Naive thymus-derived CD4-positive, alpha-beta T cell (primary cell): ENCODE measurements at regions of chr19 and their contacts with region 1.

Region 1: GRCh38 chr19:41263850-41264580 is at the start of gene HNRNPUL1:
- DNase-seq: peak; percentile 99 to 100 (median 100)
- ATAC-seq: peak; percentile 76
- H3K4me3 ChIP-seq: peak within 1 kb of the TSS; percentile 84
- H3K4me3 Mint-ChIP-seq: peak within 1 kb of the TSS; percentile 95 to 100 (median 98)
- H3K27ac ChIP-seq: peak within 1 kb of the TSS; percentile 99
- H3K27ac Mint-ChIP-seq: peak within 1 kb of the TSS; percentile 99 to 100 (median 100)
- H3K4me1 ChIP-seq: peaks cover 22 to 30% of the 10 kb centered on the region in 2 donors
- H3K4me1 Mint-ChIP-seq: peaks cover 33 to 61% (median 41%) of the 10 kb centered on the region in 7 donors
- H3K27me3 ChIP-seq: no peaks in the 10 kb centered on the region
- H3K27me3 Mint-ChIP-seq: peaks cover 0 to 8% (median 0%) of the 10 kb centered on the region in 5 donors
- total RNA-seq, gene HNRNPUL1: 253 to 319 (median 280) TPM

Region 2: DNA sequence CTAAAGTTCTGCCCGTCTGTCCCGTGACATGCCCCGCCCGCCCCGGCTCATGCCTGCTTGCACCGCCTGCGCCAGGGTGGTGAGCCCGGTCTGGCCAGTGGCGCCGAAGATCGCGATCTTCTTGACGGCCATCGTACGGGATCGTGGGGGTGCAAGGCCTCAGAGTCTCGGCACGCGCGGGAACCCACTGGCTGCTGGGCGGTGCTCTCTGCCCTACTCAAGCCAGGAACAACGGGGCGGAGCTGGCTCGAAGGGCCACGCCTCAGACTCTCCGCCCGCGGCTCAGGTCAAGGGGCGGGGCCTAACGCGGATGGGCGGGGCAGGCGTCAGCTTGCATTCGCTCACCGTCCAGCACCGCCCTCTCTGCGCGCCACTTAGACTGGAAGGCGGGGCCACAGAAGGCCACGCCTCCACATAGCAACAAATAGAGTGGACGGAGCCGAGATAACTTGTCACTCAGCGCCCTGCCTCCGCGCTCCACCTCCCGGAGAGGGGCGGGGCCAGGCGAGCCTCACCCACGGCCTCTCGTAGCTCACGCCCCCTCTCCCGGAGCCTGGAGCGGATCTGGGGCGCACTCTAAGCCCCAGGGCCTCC is 798.4 kb before region 1 on chr19 and contains the start of gene BLVRB:
- CTCF ChIA-PET with region 1: no interaction called
- POLR2A ChIA-PET with region 1: no interaction called
- intact Hi-C with region 1: loop called in 1 of 2 experiments (anchors 5 kb)
- DNase-seq: peak; percentile 98 to 100 (median 99)
- ATAC-seq: peak; percentile 90
- H3K4me3 ChIP-seq: peak within 1 kb of the TSS; percentile 44
- H3K4me3 Mint-ChIP-seq: peak within 1 kb of the TSS; percentile 83 to 95 (median 86)
- H3K27ac ChIP-seq: peak within 1 kb of the TSS; percentile 66
- H3K27ac Mint-ChIP-seq: peak within 1 kb of the TSS; percentile 70 to 94 (median 87)
- H3K4me1 ChIP-seq: peaks cover 0 to 7% of the 10 kb centered on the region in 2 donors
- H3K4me1 Mint-ChIP-seq: peaks cover 18 to 27% (median 25%) of the 10 kb centered on the region in 7 donors
- H3K27me3 ChIP-seq: peaks cover 3 to 4% of the 10 kb centered on the region in 2 donors
- H3K27me3 Mint-ChIP-seq: peaks cover 6 to 28% (median 7%) of the 10 kb centered on the region in 5 donors
- total RNA-seq, gene BLVRB: 11.0 to 42.2 (median 13.3) TPM

Region 3: GRCh38 chr19:40750059-40750873 is 513.7 kb before region 1 on chr19 and contains the start of gene ACTMAP:
- CTCF ChIA-PET with region 1: interaction called, 3 read pairs
- POLR2A ChIA-PET with region 1: interaction called, 8 read pairs
- intact Hi-C with region 1: loop called in 1 of 2 experiments (anchors 1 kb)
- DNase-seq: peak; percentile 95 to 100 (median 100)
- ATAC-seq: peak; percentile 93
- H3K4me3 ChIP-seq: peak within 1 kb of the TSS; percentile 96
- H3K4me3 Mint-ChIP-seq: peak within 1 kb of the TSS; percentile 93 to 100 (median 96)
- H3K27ac ChIP-seq: peak within 1 kb of the TSS; percentile 84
- H3K27ac Mint-ChIP-seq: peak within 1 kb of the TSS; percentile 90 to 99 (median 98)
- H3K4me1 ChIP-seq: peaks cover 11 to 27% of the 10 kb centered on the region in 2 donors
- H3K4me1 Mint-ChIP-seq: peaks cover 31 to 43% (median 42%) of the 10 kb centered on the region in 7 donors
- H3K27me3 ChIP-seq: no peaks in the 10 kb centered on the region
- H3K27me3 Mint-ChIP-seq: no peaks in the 10 kb centered on the region
- total RNA-seq, gene ACTMAP: 5.5 to 13.7 (median 7.8) TPM

Region 4: GRCh38 chr19:41144403-41144802 is 119.6 kb before region 1 on chr19:
- CTCF ChIA-PET with region 1: no interaction called
- POLR2A ChIA-PET with region 1: interaction called, 3 read pairs
- intact Hi-C with region 1: loop called in 1 of 2 experiments (anchors 1 kb)
- DNase-seq: peak; percentile 68 to 88 (median 84)
- ATAC-seq: peak; percentile 96
- H3K4me3 ChIP-seq: no peak overlapping the region
- H3K4me3 Mint-ChIP-seq: no peak overlapping the region
- H3K27ac ChIP-seq: no peak overlapping the region
- H3K27ac Mint-ChIP-seq: peak overlapping the region in 4 of 9 donors; percentile 44 to 78 (median 58)
- H3K4me1 ChIP-seq: no peaks in the 10 kb centered on the region
- H3K4me1 Mint-ChIP-seq: peaks cover 0 to 3% (median 0%) of the 10 kb centered on the region in 7 donors
- H3K27me3 ChIP-seq: no peaks in the 10 kb centered on the region
- H3K27me3 Mint-ChIP-seq: peaks cover 0 to 29% (median 15%) of the 10 kb centered on the region in 5 donors

Region 5: DNA sequence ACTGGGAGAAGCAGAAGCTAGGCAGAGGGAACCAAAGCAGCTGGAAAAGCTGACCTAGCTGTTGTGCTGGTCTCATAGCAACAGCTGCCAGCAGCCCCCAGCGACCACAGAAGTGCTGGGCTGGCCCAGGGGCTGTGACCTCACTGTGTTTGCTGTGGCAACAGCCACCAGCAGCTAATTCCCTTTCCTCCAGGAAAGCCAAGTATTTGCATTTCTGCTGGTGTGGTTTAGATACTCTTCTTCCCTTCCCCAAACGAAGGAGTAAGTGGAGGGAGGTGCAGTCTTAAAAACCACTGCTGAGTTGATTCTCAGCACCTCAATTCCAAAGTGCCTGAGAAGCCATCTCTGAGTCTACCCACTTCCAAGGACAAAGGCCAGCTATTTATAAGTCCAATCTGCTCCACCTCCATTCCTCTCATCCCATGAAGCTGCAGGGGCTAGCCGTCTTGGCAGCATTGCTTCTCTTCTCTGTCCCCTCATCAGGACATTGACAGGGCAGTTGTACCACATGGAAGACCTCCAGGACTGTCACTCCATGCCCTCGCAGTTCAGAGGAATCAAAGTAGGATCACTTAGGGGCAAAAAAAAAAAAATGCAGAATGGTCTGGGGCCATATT is 34.4 kb after region 1 on chr19:
- CTCF ChIA-PET with region 1: interaction called, 5 read pairs
- POLR2A ChIA-PET with region 1: interaction called, 339 read pairs
- intact Hi-C with region 1: no loop called
- DNase-seq: no peak
- ATAC-seq: peak; percentile 63
- H3K4me3 ChIP-seq: no peak overlapping the region
- H3K4me3 Mint-ChIP-seq: peak overlapping the region in 7 of 10 donors; percentile 9 to 95 (median 38)
- H3K27ac ChIP-seq: peak overlapping the region; percentile 74
- H3K27ac Mint-ChIP-seq: peak overlapping the region; percentile 71 to 99 (median 91)
- H3K4me1 ChIP-seq: peaks cover 68 to 75% of the 10 kb centered on the region in 2 donors
- H3K4me1 Mint-ChIP-seq: peaks cover 63 to 91% (median 82%) of the 10 kb centered on the region in 7 donors
- H3K27me3 ChIP-seq: no peaks in the 10 kb centered on the region
- H3K27me3 Mint-ChIP-seq: no peaks in the 10 kb centered on the region

Region 6: GRCh38 chr19:41397086-41398049 is 133.4 kb after region 1 on chr19 and contains the starts of genes BCKDHA and EXOSC5:
- CTCF ChIA-PET with region 1: no interaction called
- POLR2A ChIA-PET with region 1: no interaction called
- intact Hi-C with region 1: loop called (anchors 1 kb)
- DNase-seq: peak; percentile 96 to 100 (median 99)
- ATAC-seq: peak; percentile 99
- H3K4me3 ChIP-seq: peak within 1 kb of the TSS; percentile 96
- H3K4me3 Mint-ChIP-seq: peak within 1 kb of the TSS; percentile 95 to 99 (median 98)
- H3K27ac ChIP-seq: peak within 1 kb of the TSS; percentile 89
- H3K27ac Mint-ChIP-seq: peak within 1 kb of the TSS; percentile 99 to 100 (median 100)
- H3K4me1 ChIP-seq: peaks cover 19 to 23% of the 10 kb centered on the region in 2 donors
- H3K4me1 Mint-ChIP-seq: peaks cover 33 to 61% (median 50%) of the 10 kb centered on the region in 7 donors
- H3K27me3 ChIP-seq: no peaks in the 10 kb centered on the region
- H3K27me3 Mint-ChIP-seq: no peaks in the 10 kb centered on the region
- total RNA-seq, gene BCKDHA: 19.4 to 25.0 (median 20.5) TPM
- total RNA-seq, gene EXOSC5: 15.0 to 37.5 (median 20.6) TPM

Region 7: GRCh38 chr19:41476583-41476982 is 212.6 kb after region 1 on chr19:
- CTCF ChIA-PET with region 1: no interaction called
- POLR2A ChIA-PET with region 1: no interaction called
- intact Hi-C with region 1: no loop called
- DNase-seq: no peak
- ATAC-seq: no peak
- H3K4me3 ChIP-seq: no peak overlapping the region
- H3K4me3 Mint-ChIP-seq: no peak overlapping the region
- H3K27ac ChIP-seq: no peak overlapping the region
- H3K27ac Mint-ChIP-seq: no peak overlapping the region
- H3K4me1 ChIP-seq: no peaks in the 10 kb centered on the region
- H3K4me1 Mint-ChIP-seq: peaks cover 0 to 5% (median 0%) of the 10 kb centered on the region in 7 donors
- H3K27me3 ChIP-seq: no peaks in the 10 kb centered on the region
- H3K27me3 Mint-ChIP-seq: peaks cover 35 to 49% (median 43%) of the 10 kb centered on the region in 5 donors

Region 8: GRCh38 chr19:42268704-42269477 is 1004.9 kb after region 1 on chr19 and contains the start of gene CIC:
- CTCF ChIA-PET with region 1: no interaction called
- POLR2A ChIA-PET with region 1: no interaction called
- intact Hi-C with region 1: loop called in 1 of 2 experiments (anchors 5 kb)
- DNase-seq: peak; percentile 95 to 100 (median 99)
- ATAC-seq: peak; percentile 82
- H3K4me3 ChIP-seq: peak within 1 kb of the TSS; percentile 85
- H3K4me3 Mint-ChIP-seq: peak within 1 kb of the TSS in 1 of 10 donors; percentile 94
- H3K27ac ChIP-seq: peak within 1 kb of the TSS; percentile 96
- H3K27ac Mint-ChIP-seq: peak within 1 kb of the TSS in 4 of 9 donors; percentile 98 to 99 (median 99)
- H3K4me1 ChIP-seq: peaks cover 23 to 29% of the 10 kb centered on the region in 2 donors
- H3K4me1 Mint-ChIP-seq: peaks cover 8 to 31% (median 25%) of the 10 kb centered on the region in 7 donors
- H3K27me3 ChIP-seq: no peaks in the 10 kb centered on the region
- H3K27me3 Mint-ChIP-seq: no peaks in the 10 kb centered on the region
- total RNA-seq, gene CIC: 90.4 to 134 (median 102) TPM